Heart right ventricle (tissue), 16 donors: ENCODE measurements at regions of chr1 and their contacts with region 1.

Region 1: GRCh38 chr1:158011714-158012113 is 18.3 kb downstream of the KIRREL1 start:
- DNase-seq: no peak
- ATAC-seq: peak in 5 of 8 donors; percentile 11 to 39 (median 17)
- H3K4me3 ChIP-seq: peak overlapping the region in 3 of 10 donors; percentile 1 to 28 (median 17)
- H3K27ac ChIP-seq: peak overlapping the region; percentile 73 to 91 (median 85)
- H3K4me1 ChIP-seq: peaks cover 23 to 90% (median 70%) of the 10 kb centered on the region in 9 donors
- H3K27me3 ChIP-seq: no peaks in the 10 kb centered on the region
- CTCF ChIP-seq: no peak

Region 2: GRCh38 chr1:157976888-157977287 is 34.8 kb before region 1 on chr1:
- intact Hi-C with region 1: loop called in 1 of 10 experiments (anchors 2 kb)
- DNase-seq: no peak
- ATAC-seq: no peak
- H3K4me3 ChIP-seq: no peak overlapping the region
- H3K27ac ChIP-seq: no peak overlapping the region
- H3K4me1 ChIP-seq: peaks cover 0 to 11% (median 7%) of the 10 kb centered on the region in 9 donors
- H3K27me3 ChIP-seq: peaks cover 0 to 19% (median 10%) of the 10 kb centered on the region in 7 donors
- CTCF ChIP-seq: no peak